Mammary epithelial cell (primary cell): ENCODE measurements at regions of chr16 and their contacts with region 1.

Region 1: GRCh38 chr16:23248261-23249194 is 53.6 kb upstream of the SCNN1B start:
- DNase-seq: peak; percentile 79
- H3K4me3 ChIP-seq: no peak overlapping the region
- H3K27ac ChIP-seq: peak overlapping the region; percentile 7
- H3K4me1 ChIP-seq: peaks cover 12% of the 10 kb centered on the region
- H3K27me3 ChIP-seq: no peaks in the 10 kb centered on the region
- CTCF ChIP-seq: no peak

Region 2: DNA sequence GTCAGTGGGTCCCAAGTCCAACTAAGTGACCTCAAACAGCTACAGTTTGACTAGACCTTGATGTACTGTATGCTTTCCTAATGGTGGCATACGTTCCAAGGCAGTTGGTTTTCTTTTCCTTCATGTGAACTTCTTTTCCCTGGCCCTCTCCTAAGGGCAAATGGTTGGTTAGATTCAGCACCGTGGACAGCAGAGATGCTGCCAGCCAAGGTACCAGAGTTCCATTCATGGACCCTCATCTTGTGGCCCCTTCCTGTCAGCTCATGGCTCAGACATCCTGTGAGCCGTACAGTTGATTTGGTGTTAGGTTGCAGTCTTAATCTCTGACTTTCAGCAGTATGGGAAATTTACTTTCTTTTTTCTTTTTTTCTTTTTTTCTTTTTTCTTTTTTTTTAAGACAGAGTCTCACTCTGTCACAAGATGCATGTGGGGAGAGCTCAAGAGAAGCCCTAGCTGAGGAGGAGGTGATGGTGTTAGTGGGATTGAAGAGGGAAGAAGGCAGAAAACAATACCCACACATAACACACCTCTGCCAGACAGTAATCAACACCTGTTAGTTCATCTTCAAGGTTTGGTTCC is 221.7 kb before region 1 on chr16:
- CTCF ChIA-PET with region 1: no interaction called
- dilution Hi-C with region 1: loop called (anchors 25 kb)
- in situ Hi-C with region 1: no loop called
- intact Hi-C with region 1: no loop called
- DNase-seq: peak; percentile 34
- H3K4me3 ChIP-seq: no peak overlapping the region
- H3K27ac ChIP-seq: no peak overlapping the region
- H3K4me1 ChIP-seq: no peaks in the 10 kb centered on the region
- H3K27me3 ChIP-seq: peaks cover 8% of the 10 kb centered on the region
- CTCF ChIP-seq: no peak

Region 3: GRCh38 chr16:23195366-23195978 is 53.1 kb before region 1 on chr16:
- CTCF ChIA-PET with region 1: no interaction called
- dilution Hi-C with region 1: no loop called
- in situ Hi-C with region 1: no loop called
- intact Hi-C with region 1: no loop called
- DNase-seq: no peak
- H3K4me3 ChIP-seq: no peak overlapping the region
- H3K27ac ChIP-seq: no peak overlapping the region
- H3K4me1 ChIP-seq: no peaks in the 10 kb centered on the region
- H3K27me3 ChIP-seq: no peaks in the 10 kb centered on the region
- CTCF ChIP-seq: no peak

Region 4: DNA sequence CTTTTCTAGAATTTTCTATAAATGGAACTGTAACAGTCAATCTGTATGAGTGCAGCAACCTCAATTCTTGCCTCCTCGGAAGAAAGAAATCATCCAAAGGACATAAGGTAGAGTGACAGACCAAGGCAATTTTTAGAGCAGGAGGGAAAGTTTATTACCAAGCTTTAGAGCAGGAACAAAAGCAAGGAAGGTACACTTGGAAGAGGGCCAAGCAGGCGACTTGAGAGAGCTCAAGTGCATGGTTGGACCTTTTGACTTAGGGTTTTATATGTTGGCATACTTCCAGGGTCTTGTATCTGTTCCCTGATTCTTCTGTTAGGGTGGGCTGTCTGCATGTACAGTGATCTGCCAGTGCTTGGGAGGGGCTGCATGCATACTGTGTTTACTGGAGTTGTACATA is 15.7 kb before region 1 on chr16:
- CTCF ChIA-PET with region 1: no interaction called
- dilution Hi-C with region 1: no loop called
- in situ Hi-C with region 1: no loop called
- intact Hi-C with region 1: no loop called
- DNase-seq: no peak
- H3K4me3 ChIP-seq: no peak overlapping the region
- H3K27ac ChIP-seq: no peak overlapping the region
- H3K4me1 ChIP-seq: no peaks in the 10 kb centered on the region
- H3K27me3 ChIP-seq: no peaks in the 10 kb centered on the region
- CTCF ChIP-seq: no peak